Heart left ventricle (tissue), 16 donors: ENCODE measurements at regions of chr5 and their contacts with region 1.

Region 1: DNA sequence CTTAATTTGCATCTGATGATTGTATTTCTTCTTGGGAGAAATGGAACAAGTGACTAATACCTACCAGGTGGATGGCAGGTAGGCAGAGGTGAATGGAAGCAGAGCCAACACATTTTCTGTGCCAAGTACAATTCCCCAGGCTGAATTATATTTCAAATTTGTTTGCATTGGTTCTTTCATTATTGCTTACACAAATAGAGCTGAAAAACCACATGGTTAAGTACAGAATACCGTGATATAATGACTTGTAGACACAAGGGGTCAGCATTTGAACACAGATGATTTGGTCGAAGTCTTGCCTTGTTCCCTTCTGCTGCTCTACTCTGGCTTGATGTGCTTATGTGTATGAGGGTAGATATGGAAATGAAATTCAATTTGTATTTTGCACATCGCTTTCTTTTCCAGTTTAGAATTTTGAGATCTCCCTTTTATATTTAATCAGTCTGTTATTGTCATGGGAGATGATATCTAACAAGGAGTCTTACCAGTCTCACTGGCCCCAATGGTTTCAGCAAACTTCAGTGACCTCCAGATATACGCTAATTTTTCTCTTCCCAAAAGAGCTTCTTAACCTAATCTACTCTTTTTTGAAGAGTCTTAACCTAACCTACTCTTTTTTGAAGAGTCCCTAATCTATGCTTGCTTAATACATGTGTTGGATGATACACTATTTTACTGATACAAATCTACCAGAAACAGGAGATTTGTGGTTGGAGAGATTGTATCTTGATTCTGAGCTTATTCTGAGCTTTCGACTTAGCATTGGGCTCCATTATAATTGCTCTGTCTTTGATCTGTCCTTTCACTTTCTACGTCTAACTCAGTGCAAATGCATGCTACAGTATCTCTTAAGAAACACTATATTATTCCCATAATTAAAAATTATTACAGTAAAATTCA is 88.1 kb downstream of the PCSK1 start:
- DNase-seq: peak in 1 of 5 donors; percentile 18
- ATAC-seq: peak; percentile 76 to 93 (median 88)
- H3K4me3 ChIP-seq: no peak overlapping the region
- H3K27ac ChIP-seq: no peak overlapping the region
- H3K4me1 ChIP-seq: peaks cover 0 to 3% (median 0%) of the 10 kb centered on the region in 12 donors
- H3K27me3 ChIP-seq: no peaks in the 10 kb centered on the region
- CTCF ChIP-seq: peak; percentile 30 to 68 (median 58)
- POLR2A ChIP-seq: no peak

Region 2: DNA sequence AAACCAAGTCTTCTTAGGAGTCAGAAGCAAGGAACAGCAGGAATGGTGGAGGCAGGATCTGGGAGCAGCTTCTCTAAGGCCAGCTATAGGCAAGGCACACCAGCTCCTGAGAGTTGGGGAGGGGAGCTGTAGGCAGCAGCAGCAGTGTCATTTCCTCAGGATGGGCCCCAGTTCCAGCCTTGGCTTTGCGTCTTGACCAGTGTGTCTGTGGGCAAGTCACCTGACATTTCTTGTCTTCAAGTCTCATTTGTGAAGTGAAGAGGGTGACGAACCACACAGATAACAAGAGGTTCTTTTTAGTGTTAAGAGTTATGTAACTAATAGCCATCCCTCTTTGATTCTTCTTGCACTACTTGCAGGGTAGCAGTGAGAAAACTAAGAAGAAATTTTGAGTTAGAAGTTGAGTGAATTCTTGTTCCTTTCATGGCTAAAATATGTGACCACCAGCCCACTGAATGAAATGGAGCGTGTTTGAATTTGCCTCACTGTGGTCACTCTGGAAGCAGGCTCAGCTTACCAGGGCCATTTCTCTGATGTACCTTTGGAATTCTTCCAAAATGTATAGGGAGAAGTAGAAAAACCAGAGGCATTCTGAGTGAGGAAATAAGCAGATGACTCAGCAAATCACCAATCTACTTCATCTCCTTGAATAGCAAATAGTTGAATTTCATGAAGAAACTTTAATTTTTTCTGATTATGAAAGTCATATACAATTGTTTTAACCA is 571.4 kb before region 1 on chr5:
- intact Hi-C with region 1: no loop called
- DNase-seq: no peak
- ATAC-seq: peak in 3 of 4 donors; percentile 14 to 49 (median 19)
- H3K4me3 ChIP-seq: no peak overlapping the region
- H3K27ac ChIP-seq: peak overlapping the region in 3 of 12 donors; percentile 11 to 37 (median 24)
- H3K4me1 ChIP-seq: peaks cover 0 to 30% (median 13%) of the 10 kb centered on the region in 12 donors
- H3K27me3 ChIP-seq: no peaks in the 10 kb centered on the region
- CTCF ChIP-seq: no peak
- POLR2A ChIP-seq: no peak

Region 3: DNA sequence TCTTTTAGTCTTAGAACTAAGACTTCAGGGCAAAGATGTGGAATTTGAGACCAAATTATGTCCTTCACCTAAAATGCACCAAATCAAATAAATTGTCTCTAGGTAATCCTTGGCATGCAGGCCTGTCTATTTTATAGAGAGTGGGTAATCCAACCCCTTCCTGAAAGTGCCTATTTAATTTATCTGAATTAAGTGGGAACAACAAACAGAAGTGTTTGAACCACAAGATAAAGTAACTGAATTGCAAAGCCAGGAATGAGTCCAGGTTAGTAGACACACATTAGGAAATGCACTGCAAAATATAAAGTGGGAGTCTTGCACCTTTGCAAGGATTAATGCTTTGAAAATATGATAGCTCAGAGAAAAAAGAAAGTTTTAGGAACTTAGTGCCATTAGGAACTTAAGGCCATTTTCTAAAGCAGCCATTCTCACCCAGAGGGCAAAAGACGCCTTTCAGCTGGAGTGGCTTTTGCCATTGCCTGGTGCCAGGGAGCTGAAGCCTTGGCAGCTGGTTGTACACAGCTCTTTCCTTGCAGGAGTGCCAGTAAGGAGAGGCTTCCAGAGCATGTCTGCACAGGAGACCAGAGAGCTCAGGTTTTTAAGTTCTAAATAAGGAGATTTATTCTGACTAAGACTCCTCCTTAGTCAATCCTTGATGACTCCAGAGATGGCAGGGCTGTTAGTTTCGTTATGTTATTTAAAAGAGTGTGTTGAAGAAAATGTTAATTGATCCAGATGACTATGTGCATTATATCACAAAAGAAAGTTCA is 231.6 kb before region 1 on chr5:
- intact Hi-C with region 1: no loop called
- DNase-seq: peak in 2 of 5 donors; percentile 40 to 50
- ATAC-seq: peak; percentile 55 to 93 (median 79)
- H3K4me3 ChIP-seq: no peak overlapping the region
- H3K27ac ChIP-seq: no peak overlapping the region
- H3K4me1 ChIP-seq: peaks cover 0 to 6% (median 0%) of the 10 kb centered on the region in 12 donors
- H3K27me3 ChIP-seq: no peaks in the 10 kb centered on the region
- CTCF ChIP-seq: no peak
- POLR2A ChIP-seq: no peak

Region 4: GRCh38 chr5:96595300-96596090 is 250.6 kb after region 1 on chr5:
- intact Hi-C with region 1: loop called in 7 of 10 experiments (anchors 2 to 5 kb)
- DNase-seq: no peak
- ATAC-seq: no peak
- H3K4me3 ChIP-seq: no peak overlapping the region
- H3K27ac ChIP-seq: no peak overlapping the region
- H3K4me1 ChIP-seq: peaks cover 0 to 6% (median 0%) of the 10 kb centered on the region in 12 donors
- H3K27me3 ChIP-seq: no peaks in the 10 kb centered on the region
- CTCF ChIP-seq: peak in 8 of 12 donors; percentile 7 to 48 (median 27)
- POLR2A ChIP-seq: no peak

Region 5: DNA sequence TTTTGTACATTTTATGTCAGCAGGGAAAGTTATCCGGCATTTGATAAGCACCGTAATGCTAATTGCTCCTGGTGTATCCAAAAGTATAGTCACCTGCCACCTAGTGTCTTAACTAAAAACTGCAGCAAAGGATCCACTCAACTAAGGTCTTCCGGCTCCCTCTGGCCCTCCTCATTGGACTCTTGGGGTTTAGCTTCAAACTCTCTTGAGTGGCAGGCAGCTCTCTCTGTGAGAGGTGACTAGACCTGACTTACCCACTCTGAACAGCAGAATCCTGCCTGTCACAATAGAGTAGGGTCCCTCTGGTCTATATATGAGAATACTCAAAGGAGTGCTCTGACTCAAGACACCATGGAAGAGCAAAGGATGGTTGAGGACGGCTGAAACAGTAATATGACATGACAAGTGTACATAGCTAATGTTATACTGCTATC is 256.9 kb after region 1 on chr5:
- intact Hi-C with region 1: loop called (anchors 1 to 5 kb)
- DNase-seq: peak in 2 of 5 donors; percentile 37 to 48
- ATAC-seq: peak; percentile 68 to 92 (median 85)
- H3K4me3 ChIP-seq: peak overlapping the region in 3 of 12 donors; percentile 15 to 27 (median 27)
- H3K27ac ChIP-seq: no peak overlapping the region
- H3K4me1 ChIP-seq: peaks cover 0 to 9% (median 0%) of the 10 kb centered on the region in 12 donors
- H3K27me3 ChIP-seq: no peaks in the 10 kb centered on the region
- CTCF ChIP-seq: peak; percentile 76 to 90 (median 82)
- POLR2A ChIP-seq: no peak

Region 6: GRCh38 chr5:96687812-96688453 is 343.0 kb after region 1 on chr5:
- intact Hi-C with region 1: loop called in 1 of 10 experiments (anchors 10 kb)
- DNase-seq: no peak
- ATAC-seq: peak in 3 of 4 donors; percentile 75 to 80 (median 76)
- H3K4me3 ChIP-seq: peak overlapping the region in 2 of 12 donors; percentile 3 to 12
- H3K27ac ChIP-seq: peak overlapping the region in 1 of 12 donors; percentile 47
- H3K4me1 ChIP-seq: peaks cover 0 to 34% (median 10%) of the 10 kb centered on the region in 12 donors
- H3K27me3 ChIP-seq: no peaks in the 10 kb centered on the region
- CTCF ChIP-seq: peak; percentile 39 to 65 (median 48)
- POLR2A ChIP-seq: no peak